K562 (cell line): ENCODE measurements at regions of chr4 and their contacts with region 1.

Region 1: DNA sequence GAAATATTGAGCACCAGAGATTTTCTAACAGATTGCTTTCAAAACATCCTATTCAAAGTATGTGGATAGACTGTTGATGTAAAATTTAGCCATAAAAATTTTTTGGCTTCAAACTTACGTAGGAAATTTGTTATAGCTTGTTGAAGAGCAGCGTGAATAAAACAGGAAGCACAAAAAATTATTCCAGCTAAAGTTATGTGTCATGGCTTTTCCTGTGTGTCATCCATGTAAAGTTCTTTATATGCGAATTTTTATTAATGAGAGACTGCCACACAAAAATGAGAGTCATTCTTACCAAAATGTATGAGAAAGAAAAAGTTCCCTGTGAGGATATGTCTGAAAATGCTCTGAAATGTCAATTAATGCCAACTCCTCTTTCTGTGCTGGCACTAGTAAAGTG is 19.5 kb downstream of the EPGN start:
- DNase-seq: no peak
- ATAC-seq: no peak
- H3K4me3 ChIP-seq: peak overlapping the region; percentile 36
- H3K27ac ChIP-seq: peak overlapping the region; percentile 83
- H3K4me1 ChIP-seq: peaks cover 0 to 36% of the 10 kb centered on the region in 2 experiments; a peak in 3 of 5 replicates
- H3K27me3 ChIP-seq: no peaks in the 10 kb centered on the region
- CTCF ChIP-seq: no peak
- EP300 ChIP-seq: no peak
- POLR2A ChIP-seq: no peak
- RAD21 ChIP-seq: no peak

Region 2: GRCh38 chr4:74364652-74365491 is 37.1 kb after region 1 on chr4 and contains the start of gene EREG:
- CTCF ChIA-PET with region 1: no interaction called
- POLR2A ChIA-PET with region 1: no interaction called
- in situ Hi-C with region 1: no loop called
- intact Hi-C with region 1: loop called (anchors 1 kb)
- DNase-seq: peak; percentile 26 to 74 (median 46)
- ATAC-seq: peak; percentile 77
- H3K4me3 ChIP-seq: peak within 1 kb of the TSS; percentile 63
- H3K27ac ChIP-seq: peak within 1 kb of the TSS; percentile 81
- H3K4me1 ChIP-seq: peaks cover 5 to 12% of the 10 kb centered on the region in 2 experiments; a peak in 2 of 5 replicates
- H3K27me3 ChIP-seq: no peaks in the 10 kb centered on the region
- CTCF ChIP-seq: no peak
- EP300 ChIP-seq: no peak
- POLR2A ChIP-seq: peak; percentile 65
- RAD21 ChIP-seq: no peak
- polyA plus RNA-seq, gene EREG: 0.97 to 1.2 TPM

Region 3: GRCh38 chr4:74444891-74445642 is 117.3 kb after region 1 on chr4 and contains the start of gene AREG:
- CTCF ChIA-PET with region 1: no interaction called
- POLR2A ChIA-PET with region 1: no interaction called
- in situ Hi-C with region 1: no loop called
- intact Hi-C with region 1: loop called (anchors 5 kb)
- DNase-seq: peak; percentile 78 to 91 (median 84)
- ATAC-seq: peak; percentile 83
- H3K4me3 ChIP-seq: peak within 1 kb of the TSS; percentile 57
- H3K27ac ChIP-seq: peak within 1 kb of the TSS; percentile 74
- H3K4me1 ChIP-seq: peaks cover 7 to 31% of the 10 kb centered on the region in 2 experiments; a peak in 3 of 5 replicates
- H3K27me3 ChIP-seq: no peaks in the 10 kb centered on the region
- CTCF ChIP-seq: peak; percentile 69 to 87 (median 69)
- EP300 ChIP-seq: no peak
- POLR2A ChIP-seq: peak; percentile 62
- RAD21 ChIP-seq: peak in 1 of 2 experiments; percentile 56; a peak in 2 of 4 replicates
- polyA plus RNA-seq, gene AREG: 1.4 to 2.4 TPM